Activated B cell treated with CpG ODN at 0.5 μM for 24 hours (primary cell): ENCODE measurements at regions of chr10 and their contacts with region 1.

Region 1: GRCh38 chr10:133309111-133309719 is 501 bp downstream of the ZNF511 start:
- DNase-seq: peak; percentile 94
- ATAC-seq: peak; percentile 89
- H3K4me3 Mint-ChIP-seq: peak overlapping the region; percentile 78
- H3K27ac Mint-ChIP-seq: peak overlapping the region; percentile 73
- H3K4me1 Mint-ChIP-seq: peaks cover 36% of the 10 kb centered on the region
- H3K27me3 Mint-ChIP-seq: no peaks in the 10 kb centered on the region
- CTCF ChIP-seq: no peak

Region 2: DNA sequence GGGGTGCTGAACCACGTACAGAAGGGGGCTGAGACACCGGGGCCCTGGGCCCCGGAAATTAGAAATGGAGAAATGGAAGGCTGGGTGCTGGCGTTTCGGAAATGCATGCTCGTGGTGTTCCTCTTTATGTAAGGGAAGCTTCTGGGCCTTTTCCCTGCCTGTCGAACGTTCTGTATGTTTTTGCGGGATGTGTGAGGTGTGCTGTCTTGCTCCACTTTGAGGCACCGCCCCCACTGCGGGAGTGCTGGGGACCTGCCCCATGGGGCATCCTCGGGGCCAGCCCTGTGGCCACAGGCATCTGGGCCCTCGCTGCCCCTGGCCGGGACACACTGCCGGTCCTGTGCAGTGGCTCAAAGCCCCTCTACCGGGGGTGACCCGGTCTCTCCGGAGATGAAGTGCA is 73.3 kb before region 1 on chr10:
- CTCF ChIA-PET with region 1: interaction called, 3 read pairs
- POLR2A ChIA-PET with region 1: no interaction called
- intact Hi-C with region 1: loop called (anchors 2 kb)
- DNase-seq: no peak
- ATAC-seq: peak; percentile 40
- H3K4me3 Mint-ChIP-seq: peak overlapping the region; percentile 66
- H3K27ac Mint-ChIP-seq: no peak overlapping the region
- H3K4me1 Mint-ChIP-seq: peaks cover 31% of the 10 kb centered on the region
- H3K27me3 Mint-ChIP-seq: peaks cover 18% of the 10 kb centered on the region
- CTCF ChIP-seq: no peak

Region 3: GRCh38 chr10:133261726-133262325 is 47.4 kb before region 1 on chr10:
- CTCF ChIA-PET with region 1: interaction called, 4 read pairs
- POLR2A ChIA-PET with region 1: interaction called, 3 read pairs
- intact Hi-C with region 1: loop called (anchors 1 kb)
- DNase-seq: peak; percentile 80
- ATAC-seq: peak; percentile 65
- H3K4me3 Mint-ChIP-seq: peak overlapping the region; percentile 79
- H3K27ac Mint-ChIP-seq: no peak overlapping the region
- H3K4me1 Mint-ChIP-seq: peaks cover 80% of the 10 kb centered on the region
- H3K27me3 Mint-ChIP-seq: no peaks in the 10 kb centered on the region
- CTCF ChIP-seq: no peak

Region 4: DNA sequence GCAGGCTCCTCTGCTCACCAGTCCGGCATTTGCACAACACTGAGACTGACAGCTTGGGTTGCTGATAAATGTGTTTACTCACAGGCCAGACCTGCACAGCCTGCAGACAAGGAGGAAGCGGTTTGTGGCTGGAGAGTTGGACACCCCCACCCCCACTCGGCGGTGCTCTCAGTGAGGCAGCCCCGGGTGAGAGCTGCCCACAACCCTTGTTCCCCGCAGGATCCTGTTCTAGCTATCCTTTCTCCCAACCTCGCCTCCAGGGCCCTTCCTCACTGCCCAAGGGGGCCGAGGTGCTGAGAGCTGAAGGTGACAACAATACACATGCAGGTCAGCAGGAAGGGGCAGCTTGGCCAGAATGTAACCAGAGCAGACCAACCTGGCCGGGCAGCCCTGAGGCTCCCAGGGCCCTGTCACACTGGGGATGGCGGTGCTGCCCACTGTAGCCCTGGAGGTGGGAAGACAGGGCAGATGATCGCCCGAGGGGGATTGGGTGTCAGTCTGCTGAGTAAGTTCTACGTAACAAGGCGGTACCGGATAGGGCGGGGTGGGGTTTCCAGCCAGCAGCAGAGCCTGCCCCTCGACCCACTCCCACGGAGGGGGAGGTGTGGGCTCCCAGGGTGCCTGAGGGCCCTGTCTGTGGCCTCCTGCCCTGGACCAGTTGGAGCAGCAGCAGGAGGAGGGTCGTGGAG is 30.5 kb before region 1 on chr10:
- CTCF ChIA-PET with region 1: interaction called, 7 read pairs
- POLR2A ChIA-PET with region 1: interaction called, 13 read pairs
- intact Hi-C with region 1: loop called (anchors 1 kb)
- DNase-seq: peak; percentile 44
- ATAC-seq: peak; percentile 10
- H3K4me3 Mint-ChIP-seq: peak overlapping the region; percentile 76
- H3K27ac Mint-ChIP-seq: peak overlapping the region; percentile 80
- H3K4me1 Mint-ChIP-seq: peaks cover 38% of the 10 kb centered on the region
- H3K27me3 Mint-ChIP-seq: no peaks in the 10 kb centered on the region
- CTCF ChIP-seq: no peak

Region 5: GRCh38 chr10:133373104-133373624 is 63.9 kb after region 1 on chr10 and contains the start of gene ECHS1:
- CTCF ChIA-PET with region 1: no interaction called
- POLR2A ChIA-PET with region 1: no interaction called
- intact Hi-C with region 1: loop called (anchors 1 kb)
- DNase-seq: peak; percentile 96
- ATAC-seq: peak; percentile 96
- H3K4me3 Mint-ChIP-seq: peak within 1 kb of the TSS; percentile 83
- H3K27ac Mint-ChIP-seq: peak within 1 kb of the TSS; percentile 88
- H3K4me1 Mint-ChIP-seq: peaks cover 24% of the 10 kb centered on the region
- H3K27me3 Mint-ChIP-seq: no peaks in the 10 kb centered on the region
- CTCF ChIP-seq: no peak
- total RNA-seq, gene ECHS1: 37.7 and 39.4 TPM in 2 replicates

Region 6: GRCh38 chr10:133489816-133490588 is 180.8 kb after region 1 on chr10:
- CTCF ChIA-PET with region 1: no interaction called
- POLR2A ChIA-PET with region 1: no interaction called
- intact Hi-C with region 1: loop called (anchors 5 kb)
- DNase-seq: no peak
- ATAC-seq: no peak
- H3K4me3 Mint-ChIP-seq: no peak overlapping the region
- H3K27ac Mint-ChIP-seq: no peak overlapping the region
- H3K4me1 Mint-ChIP-seq: no peaks in the 10 kb centered on the region
- H3K27me3 Mint-ChIP-seq: peaks cover 4% of the 10 kb centered on the region
- CTCF ChIP-seq: no peak

Region 7: GRCh38 chr10:133616371-133617130 is 307.3 kb after region 1 on chr10:
- CTCF ChIA-PET with region 1: no interaction called
- POLR2A ChIA-PET with region 1: no interaction called
- intact Hi-C with region 1: no loop called
- DNase-seq: no peak
- ATAC-seq: no peak
- H3K4me3 Mint-ChIP-seq: no peak overlapping the region
- H3K27ac Mint-ChIP-seq: no peak overlapping the region
- H3K4me1 Mint-ChIP-seq: no peaks in the 10 kb centered on the region
- H3K27me3 Mint-ChIP-seq: peaks cover 17% of the 10 kb centered on the region
- CTCF ChIP-seq: no peak